AG04449 (cell line): ENCODE measurements at regions of chr20 and their contacts with region 1.

Region 1: GRCh38 chr20:43942661-43943290 is 28.1 kb downstream of the TOX2 start:
- DNase-seq: peak; percentile 37
- H3K4me3 ChIP-seq: no peak overlapping the region
- CTCF ChIP-seq: no peak

Region 2: GRCh38 chr20:43736588-43737158 is 206.1 kb before region 1 on chr20:
- CTCF ChIA-PET with region 1: no interaction called
- POLR2A ChIA-PET with region 1: no interaction called
- DNase-seq: no peak
- H3K4me3 ChIP-seq: no peak overlapping the region
- CTCF ChIP-seq: no peak

Region 3: GRCh38 chr20:43955062-43955749 is 12.4 kb after region 1 on chr20:
- CTCF ChIA-PET with region 1: interaction called, 11 read pairs
- POLR2A ChIA-PET with region 1: interaction called, 7 read pairs
- DNase-seq: peak; percentile 78
- H3K4me3 ChIP-seq: no peak overlapping the region
- CTCF ChIP-seq: no peak

Region 4: GRCh38 chr20:44028868-44029847 is 86.4 kb after region 1 on chr20:
- CTCF ChIA-PET with region 1: no interaction called
- POLR2A ChIA-PET with region 1: no interaction called
- DNase-seq: no peak
- H3K4me3 ChIP-seq: no peak overlapping the region
- CTCF ChIP-seq: no peak

Region 5: GRCh38 chr20:44097521-44098255 is 154.9 kb after region 1 on chr20:
- CTCF ChIA-PET with region 1: no interaction called
- POLR2A ChIA-PET with region 1: no interaction called
- DNase-seq: no peak
- H3K4me3 ChIP-seq: no peak overlapping the region
- CTCF ChIP-seq: no peak